Activated B cell treated with CpG ODN at 0.5 μM for 24 hours (primary cell): ENCODE measurements at regions of chr6 and their contacts with region 1.

Region 1: DNA sequence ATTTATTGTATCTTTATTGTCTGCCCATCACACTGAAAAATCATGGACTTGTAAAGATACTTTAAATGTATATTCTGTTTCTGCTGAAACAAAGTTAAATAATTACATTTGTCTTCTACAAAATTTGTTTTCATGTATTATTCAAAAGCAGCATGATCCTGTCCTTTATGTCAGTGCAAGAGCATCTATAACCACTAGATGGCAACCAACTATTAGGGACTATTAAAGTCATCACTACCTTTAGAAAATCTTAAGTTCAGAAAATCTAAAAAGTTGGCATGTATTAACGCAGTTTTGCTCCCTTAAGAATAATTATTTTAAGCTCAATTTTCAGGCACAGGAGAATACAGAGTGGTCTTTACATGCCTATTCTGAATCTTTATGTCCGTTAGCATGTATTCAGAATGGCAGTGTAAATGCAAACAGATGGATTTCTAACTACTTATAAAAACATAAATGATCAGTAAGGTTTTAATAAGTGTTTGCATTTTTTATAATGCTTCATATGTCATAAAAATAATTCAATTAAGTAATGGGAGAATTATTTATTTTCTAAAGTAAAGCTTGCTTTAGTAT is 17.8 kb downstream of the TMEM30A start:
- DNase-seq: no peak
- ATAC-seq: peak; percentile 77
- H3K4me3 Mint-ChIP-seq: no peak overlapping the region
- H3K27ac Mint-ChIP-seq: no peak overlapping the region
- H3K4me1 Mint-ChIP-seq: peaks cover 11% of the 10 kb centered on the region
- H3K27me3 Mint-ChIP-seq: no peaks in the 10 kb centered on the region
- CTCF ChIP-seq: peak; percentile 98

Region 2: DNA sequence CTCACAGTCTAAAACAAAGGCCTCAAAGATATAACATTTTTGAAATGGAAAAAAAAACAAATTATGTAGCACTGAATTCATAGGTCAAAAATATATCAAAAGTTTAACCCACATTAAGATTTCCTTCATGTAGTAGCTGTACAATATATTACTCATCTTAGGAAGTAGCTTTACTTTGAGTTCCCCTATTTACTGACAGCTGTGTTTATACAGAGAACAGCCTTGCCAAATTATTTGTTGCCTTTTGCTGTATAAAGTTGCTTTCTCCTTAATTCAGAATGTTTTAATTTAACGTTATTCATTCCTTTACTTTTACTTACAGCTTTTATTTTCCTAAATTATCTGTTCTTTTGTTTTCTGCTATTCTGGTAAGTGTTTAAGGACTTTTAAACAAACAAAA is 242.0 kb before region 1 on chr6:
- CTCF ChIA-PET with region 1: no interaction called
- POLR2A ChIA-PET with region 1: no interaction called
- intact Hi-C with region 1: no loop called
- DNase-seq: no peak
- ATAC-seq: no peak
- H3K4me3 Mint-ChIP-seq: no peak overlapping the region
- H3K27ac Mint-ChIP-seq: no peak overlapping the region
- H3K4me1 Mint-ChIP-seq: no peaks in the 10 kb centered on the region
- H3K27me3 Mint-ChIP-seq: no peaks in the 10 kb centered on the region
- CTCF ChIP-seq: no peak

Region 3: DNA sequence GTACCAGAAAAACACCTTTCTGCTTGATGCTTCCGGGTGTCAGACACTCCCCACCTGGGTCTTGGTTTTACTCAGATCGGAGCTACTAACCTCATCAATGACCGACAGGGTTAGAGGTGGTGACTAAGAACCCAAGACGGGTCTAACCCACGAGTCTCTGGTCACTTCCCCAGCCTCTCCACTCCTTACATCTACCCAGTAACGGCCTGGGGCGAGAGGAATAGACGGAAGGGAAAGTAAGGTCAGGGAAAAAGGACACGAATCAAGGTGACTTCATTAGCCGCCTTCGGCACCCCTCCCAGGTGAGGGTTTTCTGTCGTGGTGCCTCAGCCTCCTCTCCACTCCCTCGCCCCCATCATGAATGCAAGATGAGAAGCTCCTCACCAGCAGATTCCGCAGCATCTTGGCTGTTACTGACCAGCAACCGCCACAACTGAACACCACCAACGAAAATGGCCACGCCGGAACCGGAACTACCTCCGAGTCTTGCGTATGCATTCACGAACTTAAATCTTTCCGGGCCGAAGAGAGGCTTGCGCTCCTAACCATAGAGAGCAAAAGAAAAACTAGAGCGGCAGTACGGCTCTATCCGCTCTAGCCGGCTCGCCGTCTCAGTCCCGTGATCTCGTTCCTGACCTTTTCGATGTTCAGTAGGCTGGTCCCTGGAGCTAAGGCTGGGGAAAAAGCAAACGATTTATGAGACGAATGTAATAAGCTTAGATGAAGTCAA is 23.3 kb before region 1 on chr6 and contains the start of gene COX7A2:
- CTCF ChIA-PET with region 1: interaction called, 5 read pairs
- POLR2A ChIA-PET with region 1: interaction called, 3 read pairs
- intact Hi-C with region 1: loop called (anchors 2 kb)
- DNase-seq: peak; percentile 77
- ATAC-seq: peak; percentile 97
- H3K4me3 Mint-ChIP-seq: peak within 1 kb of the TSS; percentile 94
- H3K27ac Mint-ChIP-seq: peak within 1 kb of the TSS; percentile 95
- H3K4me1 Mint-ChIP-seq: peaks cover 21% of the 10 kb centered on the region
- H3K27me3 Mint-ChIP-seq: peaks cover 13% of the 10 kb centered on the region
- CTCF ChIP-seq: no peak
- total RNA-seq, gene COX7A2: 259 and 301 TPM in 2 replicates

Region 4: GRCh38 chr6:75296811-75297779 is 30.3 kb after region 1 on chr6:
- CTCF ChIA-PET with region 1: interaction called, 8 read pairs
- POLR2A ChIA-PET with region 1: no interaction called
- intact Hi-C with region 1: loop called (anchors 1 kb)
- DNase-seq: no peak
- ATAC-seq: peak; percentile 45
- H3K4me3 Mint-ChIP-seq: no peak overlapping the region
- H3K27ac Mint-ChIP-seq: no peak overlapping the region
- H3K4me1 Mint-ChIP-seq: no peaks in the 10 kb centered on the region
- H3K27me3 Mint-ChIP-seq: no peaks in the 10 kb centered on the region
- CTCF ChIP-seq: peak; percentile 66

Region 5: DNA sequence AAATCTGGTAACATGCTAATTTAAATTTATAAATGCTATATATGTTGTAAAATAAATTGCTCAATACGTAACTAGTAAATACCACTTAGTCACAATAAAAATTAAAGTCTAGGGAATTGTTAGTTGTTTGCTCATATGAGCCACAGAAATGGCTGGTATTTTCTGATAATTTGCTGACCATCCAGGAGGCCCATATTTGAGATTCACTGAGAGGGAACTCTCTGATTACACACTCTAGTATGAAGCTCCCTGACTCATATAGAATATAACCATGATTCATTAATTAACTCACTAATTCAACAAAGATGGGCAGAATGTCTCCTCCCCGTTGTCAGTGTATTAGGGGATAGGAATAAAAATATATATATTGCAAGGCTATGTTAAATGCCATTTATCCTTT is 64.3 kb after region 1 on chr6:
- CTCF ChIA-PET with region 1: no interaction called
- POLR2A ChIA-PET with region 1: no interaction called
- intact Hi-C with region 1: no loop called
- DNase-seq: no peak
- ATAC-seq: no peak
- H3K4me3 Mint-ChIP-seq: no peak overlapping the region
- H3K27ac Mint-ChIP-seq: no peak overlapping the region
- H3K4me1 Mint-ChIP-seq: no peaks in the 10 kb centered on the region
- H3K27me3 Mint-ChIP-seq: peaks cover 4% of the 10 kb centered on the region
- CTCF ChIP-seq: no peak

Region 6: DNA sequence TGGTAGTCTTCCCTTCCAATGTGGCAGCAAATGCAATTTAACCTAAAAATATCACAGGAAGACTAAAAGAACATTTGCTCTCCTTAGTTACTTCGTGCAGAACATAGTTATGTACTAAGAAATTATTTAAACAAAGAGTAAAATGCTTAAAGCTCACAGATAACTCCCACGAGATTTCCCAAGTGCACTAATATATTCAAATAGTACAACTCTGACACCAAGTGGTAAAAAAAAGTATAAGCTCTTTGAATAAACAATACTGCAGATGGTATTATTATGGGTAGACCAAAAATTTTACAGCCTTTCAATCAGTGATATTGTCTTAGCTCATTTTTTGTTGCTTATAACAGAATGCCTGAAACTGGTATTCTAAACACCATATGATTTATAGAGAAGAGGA is 279.6 kb after region 1 on chr6:
- CTCF ChIA-PET with region 1: interaction called, 11 read pairs
- POLR2A ChIA-PET with region 1: no interaction called
- intact Hi-C with region 1: loop called (anchors 1 kb)
- DNase-seq: no peak
- ATAC-seq: no peak
- H3K4me3 Mint-ChIP-seq: no peak overlapping the region
- H3K27ac Mint-ChIP-seq: no peak overlapping the region
- H3K4me1 Mint-ChIP-seq: no peaks in the 10 kb centered on the region
- H3K27me3 Mint-ChIP-seq: peaks cover 6% of the 10 kb centered on the region
- CTCF ChIP-seq: no peak

Region 7: DNA sequence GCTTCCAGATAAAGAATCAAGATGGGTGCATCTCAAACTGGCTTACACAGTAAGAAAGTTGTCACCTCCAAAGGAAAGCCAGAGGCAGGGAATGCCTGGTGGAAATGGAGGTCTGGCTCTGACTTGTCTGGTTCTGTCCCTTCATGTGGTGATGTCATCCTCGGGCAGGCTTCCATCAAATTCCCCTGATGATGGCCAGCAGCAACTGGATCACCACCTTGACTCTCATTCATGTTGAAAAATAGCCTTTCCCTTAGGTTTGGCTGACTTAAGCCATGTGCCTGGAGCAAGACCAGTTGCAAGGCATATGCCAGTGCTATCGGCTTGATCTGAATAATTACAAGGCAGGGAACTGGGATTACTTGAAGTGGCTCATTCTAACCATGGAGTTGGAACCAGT is 776.9 kb after region 1 on chr6:
- CTCF ChIA-PET with region 1: no interaction called
- POLR2A ChIA-PET with region 1: no interaction called
- intact Hi-C with region 1: no loop called
- DNase-seq: no peak
- ATAC-seq: no peak
- H3K4me3 Mint-ChIP-seq: no peak overlapping the region
- H3K27ac Mint-ChIP-seq: no peak overlapping the region
- H3K4me1 Mint-ChIP-seq: no peaks in the 10 kb centered on the region
- H3K27me3 Mint-ChIP-seq: no peaks in the 10 kb centered on the region
- CTCF ChIP-seq: no peak